GM12878 (cell line): ENCODE measurements at regions of chr21 and their contacts with region 1.

Region 1: DNA sequence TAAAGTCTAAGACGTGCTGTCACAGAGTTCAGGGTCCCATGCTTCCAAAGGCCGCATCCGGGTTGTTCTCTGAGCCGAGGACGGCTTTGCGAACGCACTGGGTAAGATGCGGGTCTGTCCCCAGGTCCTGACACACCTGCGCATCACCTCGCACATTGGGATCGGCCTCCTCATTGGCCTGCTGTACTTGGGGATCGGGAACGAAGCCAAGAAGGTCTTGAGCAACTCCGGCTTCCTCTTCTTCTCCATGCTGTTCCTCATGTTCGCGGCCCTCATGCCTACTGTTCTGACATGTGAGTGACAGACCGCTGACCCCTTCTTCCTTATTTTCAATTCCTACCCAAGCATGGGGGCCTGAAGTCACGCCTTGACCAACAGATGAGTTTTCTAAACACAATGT is 25.3 kb downstream of the TFF3 start:
- DNase-seq: no peak
- ATAC-seq: no peak
- H3K4me3 ChIP-seq: no peak overlapping the region
- H3K27ac ChIP-seq: no peak overlapping the region
- H3K4me1 ChIP-seq: peaks cover 28% of the 10 kb centered on the region
- H3K27me3 ChIP-seq: no peaks in the 10 kb centered on the region
- CTCF ChIP-seq: no peak
- EP300 ChIP-seq: no peak
- POLR2A ChIP-seq: no peak
- RAD21 ChIP-seq: no peak

Region 2: DNA sequence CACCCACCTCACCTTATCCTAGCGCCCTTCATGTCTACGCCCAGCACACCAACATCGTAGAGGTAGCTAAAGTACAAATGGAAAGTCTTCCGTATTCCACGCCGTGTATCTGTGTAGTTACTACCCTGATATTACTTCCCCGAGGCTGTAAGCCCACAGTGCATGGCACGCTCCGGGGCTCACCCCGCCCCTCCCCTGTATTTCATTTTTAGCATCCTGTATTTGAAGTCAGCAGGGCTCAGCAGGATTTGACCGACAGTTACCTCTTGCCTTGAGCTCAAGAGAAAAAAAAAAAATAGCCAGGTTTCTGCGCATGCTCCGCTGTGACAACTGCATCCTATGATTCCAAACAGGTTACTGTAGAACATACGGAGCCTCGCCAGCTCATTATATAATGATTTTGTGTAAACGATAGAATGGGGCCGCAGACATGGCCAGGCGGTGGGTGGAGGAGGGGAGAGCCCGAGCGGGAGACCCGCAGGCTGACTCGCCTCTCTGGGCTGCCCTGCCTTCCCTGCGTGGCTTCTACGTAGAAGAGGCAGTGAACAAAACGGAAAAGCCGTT is 69.7 kb before region 1 on chr21:
- CTCF ChIA-PET with region 1: no interaction called
- POLR2A ChIA-PET with region 1: interaction called, 3 read pairs
- RAD21 ChIA-PET with region 1: interaction called, 5 read pairs
- SMC1A ChIA-PET with region 1: interaction called, 10 read pairs
- in situ Hi-C with region 1: no loop called
- intact Hi-C with region 1: no loop called
- DNase-seq: no peak
- ATAC-seq: peak; percentile 81
- H3K4me3 ChIP-seq: peak overlapping the region; percentile 71
- H3K27ac ChIP-seq: no peak overlapping the region
- H3K4me1 ChIP-seq: peaks cover 9% of the 10 kb centered on the region; the same call in 1 of the 2 replicates
- H3K27me3 ChIP-seq: peaks cover 0 to 4% of the 10 kb centered on the region in 2 experiments; a peak in 1 of 4 replicates
- CTCF ChIP-seq: no peak
- EP300 ChIP-seq: no peak
- POLR2A ChIP-seq: no peak
- RAD21 ChIP-seq: no peak

Region 3: GRCh38 chr21:42238185-42238934 is 51.6 kb before region 1 on chr21:
- CTCF ChIA-PET with region 1: interaction called, 6 read pairs
- POLR2A ChIA-PET with region 1: interaction called, 12 read pairs
- RAD21 ChIA-PET with region 1: interaction called, 21 read pairs
- SMC1A ChIA-PET with region 1: interaction called, 34 read pairs
- in situ Hi-C with region 1: no loop called
- intact Hi-C with region 1: loop called (anchors 5 kb)
- DNase-seq: peak; percentile 57
- ATAC-seq: peak; percentile 39
- H3K4me3 ChIP-seq: no peak overlapping the region
- H3K27ac ChIP-seq: peak overlapping the region; percentile 22
- H3K4me1 ChIP-seq: peaks cover 65% of the 10 kb centered on the region
- H3K27me3 ChIP-seq: no peaks in the 10 kb centered on the region
- CTCF ChIP-seq: no peak
- EP300 ChIP-seq: peak; percentile 25 to 39; a peak in 1 of 4 replicates
- POLR2A ChIP-seq: no peak
- RAD21 ChIP-seq: no peak

Region 4: DNA sequence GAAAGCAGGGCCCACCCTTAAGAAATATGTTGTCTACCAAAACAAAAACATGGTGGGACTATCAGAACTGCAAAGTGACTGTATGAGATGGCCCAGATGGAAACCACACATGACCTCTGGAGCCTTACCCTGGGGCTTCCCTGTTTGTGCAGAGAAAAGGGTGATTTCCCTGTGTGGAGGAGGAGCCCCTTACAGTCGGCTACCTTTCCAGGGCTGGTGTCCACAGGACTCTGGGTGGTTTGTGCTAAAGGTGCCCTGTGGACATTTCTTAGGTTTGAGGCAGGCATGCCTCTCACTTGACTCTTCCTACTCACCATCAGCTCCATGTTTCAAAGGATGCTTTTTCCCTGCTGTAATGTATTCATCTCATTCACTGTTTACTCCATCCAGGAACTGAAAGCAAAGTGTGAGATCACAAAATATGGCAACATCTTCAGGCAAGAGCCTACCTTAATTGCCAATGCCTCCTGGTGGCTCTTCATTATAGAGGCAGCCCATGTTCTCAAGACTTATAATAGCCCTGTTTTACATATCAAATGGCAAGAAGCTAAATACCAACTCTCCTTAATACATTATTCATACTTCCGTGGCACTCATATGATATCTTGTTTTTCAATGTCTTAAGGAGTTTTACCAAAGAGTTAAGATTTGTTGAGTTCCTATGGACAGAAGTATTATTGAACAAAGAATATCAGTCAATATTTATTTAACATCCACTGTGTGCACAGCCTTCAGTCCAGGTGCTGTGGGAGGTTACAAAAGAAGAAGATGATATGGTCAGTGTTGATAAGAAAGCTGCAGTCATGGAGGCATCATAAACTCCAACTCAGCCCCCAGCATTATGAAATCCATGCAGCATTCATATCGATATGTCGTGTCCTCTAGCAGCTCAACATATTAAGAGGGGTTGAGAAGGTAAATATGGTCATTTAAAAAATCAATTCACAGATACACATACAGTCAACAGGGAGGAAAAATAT is 40.7 kb after region 1 on chr21:
- CTCF ChIA-PET with region 1: no interaction called
- POLR2A ChIA-PET with region 1: no interaction called
- RAD21 ChIA-PET with region 1: no interaction called
- SMC1A ChIA-PET with region 1: interaction called, 10 read pairs
- in situ Hi-C with region 1: no loop called
- intact Hi-C with region 1: loop called (anchors 5 kb)
- DNase-seq: no peak
- ATAC-seq: peak; percentile 94
- H3K4me3 ChIP-seq: no peak overlapping the region
- H3K27ac ChIP-seq: no peak overlapping the region
- H3K4me1 ChIP-seq: peaks cover 3% of the 10 kb centered on the region; the same call in 1 of the 2 replicates
- H3K27me3 ChIP-seq: no peaks in the 10 kb centered on the region
- CTCF ChIP-seq: no peak; a peak in 1 of 6 replicates
- EP300 ChIP-seq: no peak
- POLR2A ChIP-seq: no peak
- RAD21 ChIP-seq: 0 out of 2 replicates have a peak, but pooled peaks have one; percentile 20